AG04449 (cell line): ENCODE measurements at regions of chr1 and their contacts with region 1.

Region 1: DNA sequence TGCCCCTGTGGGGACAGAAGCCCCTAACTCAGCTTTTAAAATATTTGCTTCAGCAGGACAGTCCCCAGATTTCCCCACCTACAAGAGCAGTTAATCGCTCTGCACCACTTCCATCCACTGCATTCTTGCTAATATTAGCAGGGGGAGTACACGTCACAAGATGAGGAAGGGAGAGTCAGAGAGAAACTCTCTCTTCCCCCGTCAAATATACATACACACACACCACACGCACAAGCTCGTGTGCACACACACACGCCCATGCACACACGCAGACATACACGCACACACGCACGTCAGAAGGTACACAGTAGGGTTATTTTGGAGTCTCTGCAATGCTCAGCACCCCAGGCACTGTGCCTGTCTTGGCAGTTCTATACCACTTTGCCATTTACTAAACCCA is 2.1 kb downstream of the CLCA1 start:
- DNase-seq: no peak
- H3K4me3 ChIP-seq: no peak overlapping the region
- CTCF ChIP-seq: no peak

Region 2: GRCh38 chr1:86429835-86430234 is 41.0 kb before region 1 on chr1:
- CTCF ChIA-PET with region 1: interaction called, 12 read pairs
- POLR2A ChIA-PET with region 1: no interaction called
- DNase-seq: peak; percentile 84
- H3K4me3 ChIP-seq: no peak overlapping the region
- CTCF ChIP-seq: no peak

Region 3: GRCh38 chr1:86447198-86447790 is 23.6 kb before region 1 on chr1:
- CTCF ChIA-PET with region 1: interaction called, 14 read pairs
- POLR2A ChIA-PET with region 1: no interaction called
- DNase-seq: no peak
- H3K4me3 ChIP-seq: no peak overlapping the region
- CTCF ChIP-seq: no peak

Region 4: GRCh38 chr1:86499987-86500593 is 29.2 kb after region 1 on chr1:
- CTCF ChIA-PET with region 1: interaction called, 34 read pairs
- POLR2A ChIA-PET with region 1: no interaction called
- DNase-seq: no peak
- H3K4me3 ChIP-seq: no peak overlapping the region
- CTCF ChIP-seq: peak; percentile 33